ENCODE measurements at regions of chr19 and their contacts with region 1.

Region 1: DNA sequence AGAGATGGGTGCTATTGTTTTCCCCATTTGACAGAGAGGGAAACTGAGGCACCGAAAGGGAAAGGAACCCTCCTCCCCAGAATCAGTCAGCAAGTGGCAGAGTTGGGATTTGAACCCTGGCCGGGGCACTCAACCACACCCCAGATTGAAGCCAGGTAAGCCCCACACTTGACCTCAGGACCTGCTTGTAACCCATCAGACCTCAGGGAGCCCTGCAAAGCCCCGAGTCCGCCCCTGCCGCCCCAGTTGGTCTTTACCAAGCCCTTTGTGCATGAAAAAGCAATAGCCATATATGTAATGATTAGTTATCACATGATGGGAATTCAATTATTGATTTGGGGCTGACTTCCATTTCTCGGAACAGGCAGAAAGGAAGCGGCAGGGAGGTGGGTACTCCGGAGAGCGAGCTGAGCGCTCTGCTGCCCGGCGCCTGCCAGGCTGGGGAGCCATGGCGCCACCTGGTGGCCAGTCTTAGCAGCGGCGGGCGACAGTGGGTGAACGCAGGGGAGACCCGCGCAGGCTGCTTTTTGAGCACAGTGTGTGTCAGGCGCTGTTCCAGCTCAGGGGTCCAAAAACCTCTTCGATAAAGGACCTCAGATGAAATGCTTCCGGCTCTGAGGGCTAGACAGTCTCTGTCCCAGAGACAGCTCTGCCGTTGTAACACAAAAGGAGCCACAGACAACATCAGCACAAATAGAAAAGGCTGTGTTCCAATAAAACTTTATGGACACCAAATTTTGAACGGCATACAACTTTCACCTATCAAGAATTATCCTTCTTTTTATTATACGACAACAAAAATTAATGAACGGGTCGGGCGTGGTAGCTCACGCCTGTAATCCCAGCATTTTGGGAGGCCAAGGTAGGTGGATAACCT is 82.9 kb upstream of the CACNA1A start:
- DNase-seq: peak; percentile 81
- H3K4me3 ChIP-seq: peak overlapping the region; percentile 64
- H3K27ac ChIP-seq: no peak overlapping the region
- H3K4me1 ChIP-seq: no peaks in the 10 kb centered on the region
- H3K27me3 ChIP-seq: no peaks in the 10 kb centered on the region

Region 2: DNA sequence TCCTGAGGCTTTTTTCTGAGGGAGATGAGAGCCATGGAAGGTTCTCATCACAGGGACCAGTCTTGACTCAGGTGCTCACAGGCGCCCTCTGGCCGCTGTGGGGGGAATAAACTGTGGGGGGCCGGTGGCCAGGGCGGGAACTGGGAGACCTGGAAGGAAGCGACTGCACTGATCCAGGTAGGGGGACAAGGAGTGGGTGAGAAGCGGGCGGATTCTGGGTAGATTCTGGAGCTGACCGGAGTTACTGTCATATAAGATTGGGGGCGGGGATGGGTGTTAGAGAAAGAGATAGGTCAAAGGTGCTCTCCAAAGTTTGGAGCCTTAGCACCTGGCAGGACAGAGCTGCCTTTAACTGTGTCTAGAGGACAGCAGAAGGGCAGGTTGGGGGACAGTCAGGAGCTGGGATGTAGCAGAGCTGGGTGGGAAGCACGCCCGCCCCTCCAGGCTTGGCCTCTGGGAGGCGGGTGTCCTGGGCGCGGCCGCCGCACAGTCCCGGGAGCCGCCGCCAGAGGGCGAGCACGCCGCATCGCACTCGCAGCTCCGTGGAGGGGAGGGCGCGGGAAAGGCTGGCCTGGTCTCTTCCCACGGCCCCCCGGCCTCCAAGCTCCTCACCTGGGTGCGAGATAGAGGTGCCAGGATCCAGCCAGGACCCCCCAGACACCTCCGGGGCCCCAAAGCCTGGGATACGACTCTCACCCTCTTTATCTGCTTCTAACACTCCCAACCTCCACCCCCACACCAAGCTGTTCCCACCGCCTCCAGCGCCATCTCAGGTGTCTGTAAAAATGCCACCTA is 624.0 kb before region 1 on chr19:
- in situ Hi-C with region 1: loop called (anchors 25 kb)
- DNase-seq: peak; percentile 80
- H3K4me3 ChIP-seq: peak overlapping the region; percentile 81
- H3K27ac ChIP-seq: no peak overlapping the region
- H3K4me1 ChIP-seq: peaks cover 14% of the 10 kb centered on the region
- H3K27me3 ChIP-seq: no peaks in the 10 kb centered on the region

Region 3: GRCh38 chr19:13277104-13277809 is 311.9 kb before region 1 on chr19:
- in situ Hi-C with region 1: loop called (anchors 10 kb)
- DNase-seq: peak; percentile 81
- H3K4me3 ChIP-seq: no peak overlapping the region
- H3K27ac ChIP-seq: no peak overlapping the region
- H3K4me1 ChIP-seq: peaks cover 4% of the 10 kb centered on the region; the same call in 1 of the 2 replicates
- H3K27me3 ChIP-seq: no peaks in the 10 kb centered on the region

Region 4: DNA sequence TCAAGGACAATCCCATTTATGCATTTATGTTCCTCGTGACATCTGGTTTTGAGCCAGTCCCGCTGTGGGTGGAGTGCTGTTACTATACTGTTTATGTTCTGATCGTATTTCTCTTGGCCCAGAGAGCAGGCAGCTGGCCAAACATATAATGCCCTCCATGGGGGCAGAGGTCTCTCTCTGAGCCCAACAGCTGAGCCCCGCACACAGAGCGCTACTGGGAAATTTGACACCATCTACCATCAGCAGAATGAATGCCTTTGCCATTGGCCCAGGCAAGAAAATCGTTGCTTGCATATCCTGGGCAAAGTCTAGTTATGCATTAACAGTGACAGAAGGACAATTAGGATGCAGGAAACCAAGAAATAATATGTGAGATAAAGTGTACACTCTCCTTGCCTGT is 43.9 kb after region 1 on chr19:
- in situ Hi-C with region 1: no loop called
- DNase-seq: peak; percentile 14
- H3K4me3 ChIP-seq: no peak overlapping the region
- H3K27ac ChIP-seq: no peak overlapping the region
- H3K4me1 ChIP-seq: peaks cover 14% of the 10 kb centered on the region
- H3K27me3 ChIP-seq: no peaks in the 10 kb centered on the region

Region 5: DNA sequence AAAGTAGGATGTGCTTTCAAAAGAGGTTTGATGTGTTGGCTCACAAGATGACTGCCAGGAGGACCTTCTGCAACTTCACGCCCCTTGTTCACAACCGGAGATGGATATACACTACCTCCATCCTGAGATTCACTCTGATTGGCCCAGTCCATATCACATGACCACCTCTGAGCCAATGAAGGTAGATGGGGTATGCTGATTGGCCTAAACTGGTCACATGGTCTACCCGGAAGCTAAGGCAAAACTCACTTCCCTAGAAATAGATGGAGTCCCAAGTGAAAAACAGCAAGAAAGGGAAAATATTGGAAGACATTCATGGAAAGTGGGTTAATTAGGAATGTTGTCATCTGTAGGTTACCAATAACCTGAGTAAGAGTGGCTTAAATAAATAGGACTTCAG is 55.5 kb after region 1 on chr19:
- in situ Hi-C with region 1: no loop called
- DNase-seq: no peak
- H3K4me3 ChIP-seq: no peak overlapping the region
- H3K27ac ChIP-seq: no peak overlapping the region
- H3K4me1 ChIP-seq: no peaks in the 10 kb centered on the region
- H3K27me3 ChIP-seq: no peaks in the 10 kb centered on the region